Endothelial cell of umbilical vein (primary cell): ENCODE measurements at regions of chr15 and their contacts with region 1.

Region 1: DNA sequence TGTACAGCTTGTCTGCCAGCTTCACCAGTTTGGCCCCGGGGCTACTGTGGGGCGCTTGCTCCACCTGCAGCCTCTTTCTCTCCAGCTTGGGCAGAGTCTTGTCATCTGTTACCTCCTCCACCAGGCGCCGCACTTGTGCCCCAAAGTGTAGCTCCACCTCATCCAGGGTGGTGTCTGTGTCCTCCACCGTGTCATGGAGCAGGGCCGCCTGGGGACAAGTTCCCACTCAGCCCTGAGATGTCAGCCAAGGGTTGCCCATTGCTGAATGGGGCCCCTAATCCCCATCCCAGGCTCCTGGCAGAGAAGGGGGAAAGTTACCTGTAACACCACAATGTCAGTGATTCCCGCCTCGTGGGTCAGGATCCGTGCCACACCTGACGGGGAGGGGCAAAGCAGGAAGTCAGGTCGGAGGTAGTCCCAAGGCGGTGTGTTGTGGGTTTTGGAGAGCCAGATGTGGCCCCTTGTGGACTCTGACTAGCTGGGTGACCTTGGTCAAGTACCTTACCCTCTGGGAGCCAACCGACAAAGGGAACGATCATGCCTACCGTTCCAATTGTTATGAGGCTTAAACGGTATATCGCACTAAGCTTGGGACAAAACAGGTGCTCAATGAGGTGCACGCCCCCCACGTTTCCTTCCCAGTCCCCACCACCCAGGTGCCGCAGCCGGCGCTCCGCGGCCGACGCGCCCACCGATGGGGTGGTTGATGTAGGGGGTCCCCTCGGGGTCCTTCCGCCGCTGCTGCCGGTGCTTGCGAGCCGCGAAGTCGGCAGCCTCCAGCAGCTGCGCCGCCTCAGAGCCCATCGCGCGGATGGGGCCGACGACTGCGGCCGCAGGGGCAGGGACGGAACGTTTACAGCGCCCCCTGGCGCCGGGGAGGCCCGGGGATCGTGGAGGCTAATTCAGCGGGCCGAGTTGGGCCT is at the start of gene HDDC3:
- DNase-seq: peak; percentile 79
- H3K4me3 ChIP-seq: peak within 1 kb of the TSS; percentile 33 to 80 (median 62)
- H3K27ac ChIP-seq: no peak within 1 kb of the TSS
- H3K4me1 ChIP-seq: peaks cover 36% of the 10 kb centered on the region
- H3K27me3 ChIP-seq: no peaks in the 10 kb centered on the region
- CTCF ChIP-seq: peak; percentile 98
- POLR2A ChIP-seq: peak; percentile 74
- total RNA-seq, gene HDDC3: 12.3 and 16.0 TPM in 2 replicates

Region 2: GRCh38 chr15:90497912-90498311 is 434.1 kb before region 1 on chr15:
- CTCF ChIA-PET with region 1: no interaction called
- POLR2A ChIA-PET with region 1: no interaction called
- dilution Hi-C with region 1: no loop called
- intact Hi-C with region 1: loop called (anchors 5 kb)
- DNase-seq: no peak
- H3K4me3 ChIP-seq: no peak overlapping the region
- H3K27ac ChIP-seq: no peak overlapping the region
- H3K4me1 ChIP-seq: no peaks in the 10 kb centered on the region
- H3K27me3 ChIP-seq: no peaks in the 10 kb centered on the region
- CTCF ChIP-seq: no peak
- POLR2A ChIP-seq: no peak

Region 3: GRCh38 chr15:90716976-90717821 is 214.8 kb before region 1 on chr15 and contains the start of gene BLM:
- CTCF ChIA-PET with region 1: no interaction called
- POLR2A ChIA-PET with region 1: no interaction called
- dilution Hi-C with region 1: no loop called
- intact Hi-C with region 1: loop called (anchors 1 kb)
- DNase-seq: peak; percentile 99
- H3K4me3 ChIP-seq: peak within 1 kb of the TSS; percentile 63 to 93 (median 79)
- H3K27ac ChIP-seq: peak within 1 kb of the TSS; percentile 90
- H3K4me1 ChIP-seq: peaks cover 15% of the 10 kb centered on the region
- H3K27me3 ChIP-seq: no peaks in the 10 kb centered on the region
- CTCF ChIP-seq: peak in 1 of 2 donors; percentile 34
- POLR2A ChIP-seq: peak; percentile 90
- total RNA-seq, gene BLM: 17.3 and 18.6 TPM in 2 replicates

Region 4: DNA sequence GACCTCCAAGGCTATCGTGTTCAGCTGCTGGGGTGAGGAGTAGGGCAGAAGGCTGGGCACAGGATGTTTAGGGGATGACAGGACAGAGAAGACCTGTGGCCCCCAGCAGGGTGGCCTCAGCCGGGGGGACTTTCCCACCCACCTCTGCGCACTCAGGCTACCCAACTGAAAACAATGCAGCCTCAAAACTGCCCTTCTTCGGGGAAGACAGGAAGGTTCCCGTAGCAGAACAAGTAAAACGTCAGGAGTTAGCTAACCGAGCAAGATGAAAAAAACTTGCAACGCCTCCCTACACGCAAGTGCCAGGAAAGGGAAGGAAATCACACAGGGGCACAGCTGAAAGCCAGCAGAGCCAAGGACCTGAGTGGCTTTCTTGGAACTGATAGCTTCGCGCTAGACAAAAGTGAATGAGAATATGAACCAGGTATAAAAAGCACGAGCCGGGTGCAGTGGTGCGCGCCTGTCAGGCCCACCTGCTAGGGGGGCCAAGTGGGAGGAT is 102.0 kb before region 1 on chr15:
- CTCF ChIA-PET with region 1: no interaction called
- POLR2A ChIA-PET with region 1: no interaction called
- dilution Hi-C with region 1: no loop called
- intact Hi-C with region 1: no loop called
- DNase-seq: peak; percentile 34
- H3K4me3 ChIP-seq: no peak overlapping the region
- H3K27ac ChIP-seq: no peak overlapping the region
- H3K4me1 ChIP-seq: no peaks in the 10 kb centered on the region
- H3K27me3 ChIP-seq: no peaks in the 10 kb centered on the region
- CTCF ChIP-seq: no peak
- POLR2A ChIP-seq: no peak

Region 5: GRCh38 chr15:90902040-90902839 is 29.8 kb before region 1 on chr15:
- CTCF ChIA-PET with region 1: interaction called, 57 read pairs
- POLR2A ChIA-PET with region 1: no interaction called
- dilution Hi-C with region 1: no loop called
- intact Hi-C with region 1: loop called (anchors 1 kb)
- DNase-seq: peak; percentile 88
- H3K4me3 ChIP-seq: peak overlapping the region; percentile 53 to 79 (median 63)
- H3K27ac ChIP-seq: peak overlapping the region; percentile 51
- H3K4me1 ChIP-seq: peaks cover 17% of the 10 kb centered on the region
- H3K27me3 ChIP-seq: no peaks in the 10 kb centered on the region
- CTCF ChIP-seq: peak; percentile 66 to 77
- POLR2A ChIP-seq: peak; percentile 78

Region 6: GRCh38 chr15:90921887-90922286 is 10.1 kb before region 1 on chr15:
- CTCF ChIA-PET with region 1: interaction called, 31 read pairs
- POLR2A ChIA-PET with region 1: no interaction called
- dilution Hi-C with region 1: no loop called
- intact Hi-C with region 1: no loop called
- DNase-seq: no peak
- H3K4me3 ChIP-seq: no peak overlapping the region
- H3K27ac ChIP-seq: no peak overlapping the region
- H3K4me1 ChIP-seq: no peaks in the 10 kb centered on the region
- H3K27me3 ChIP-seq: no peaks in the 10 kb centered on the region
- CTCF ChIP-seq: no peak
- POLR2A ChIP-seq: no peak

Region 7: GRCh38 chr15:90946538-90946937 is 14.5 kb after region 1 on chr15:
- CTCF ChIA-PET with region 1: interaction called, 29 read pairs
- POLR2A ChIA-PET with region 1: no interaction called
- dilution Hi-C with region 1: no loop called
- intact Hi-C with region 1: no loop called
- DNase-seq: no peak
- H3K4me3 ChIP-seq: no peak overlapping the region
- H3K27ac ChIP-seq: no peak overlapping the region
- H3K4me1 ChIP-seq: peaks cover 10% of the 10 kb centered on the region
- H3K27me3 ChIP-seq: no peaks in the 10 kb centered on the region
- CTCF ChIP-seq: no peak
- POLR2A ChIP-seq: no peak

Region 8: GRCh38 chr15:90994417-90995311 is 62.7 kb after region 1 on chr15 and contains the start of gene PRC1:
- CTCF ChIA-PET with region 1: interaction called, 3 read pairs
- POLR2A ChIA-PET with region 1: no interaction called
- dilution Hi-C with region 1: no loop called
- intact Hi-C with region 1: loop called (anchors 1 kb)
- DNase-seq: peak; percentile 99
- H3K4me3 ChIP-seq: peak within 1 kb of the TSS; percentile 71 to 98 (median 93)
- H3K27ac ChIP-seq: peak within 1 kb of the TSS; percentile 94
- H3K4me1 ChIP-seq: peaks cover 20% of the 10 kb centered on the region
- H3K27me3 ChIP-seq: no peaks in the 10 kb centered on the region
- CTCF ChIP-seq: no peak
- POLR2A ChIP-seq: peak; percentile 42
- total RNA-seq, gene PRC1: 171 and 185 TPM in 2 replicates